ENCODE measurements at regions of chr14 and their contacts with region 1.

Region 1: DNA sequence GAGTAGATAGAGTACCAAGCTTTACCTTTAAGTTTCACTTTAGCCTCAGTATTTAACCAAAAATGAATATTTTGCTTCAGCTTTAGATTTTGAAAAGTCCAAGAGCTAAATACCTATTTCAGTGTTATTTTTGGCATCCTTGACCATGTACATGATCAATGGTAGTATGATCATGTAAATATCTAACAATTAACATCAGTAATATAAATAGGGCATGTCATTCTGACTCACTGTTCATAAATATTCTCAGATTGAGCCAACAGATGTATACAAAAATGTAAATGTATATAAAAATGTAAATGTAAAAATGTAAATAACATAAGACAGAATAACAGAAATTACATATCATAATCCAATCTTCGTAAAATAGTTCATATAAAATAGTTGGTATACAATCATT is 15.3 kb upstream of the NOXRED1 start:
- DNase-seq: no peak
- ATAC-seq: no peak
- H3K4me3 Mint-ChIP-seq: no peak overlapping the region
- H3K27ac Mint-ChIP-seq: no peak overlapping the region
- H3K4me1 Mint-ChIP-seq: no peaks in the 10 kb centered on the region
- H3K27me3 Mint-ChIP-seq: no peaks in the 10 kb centered on the region

Region 2: GRCh38 chr14:77424862-77425261 is 13.7 kb before region 1 on chr14:
- CTCF ChIA-PET with region 1: interaction called, 12 read pairs
- POLR2A ChIA-PET with region 1: interaction called, 3 read pairs
- intact Hi-C with region 1: no loop called
- DNase-seq: no peak
- ATAC-seq: no peak
- H3K4me3 Mint-ChIP-seq: no peak overlapping the region
- H3K27ac Mint-ChIP-seq: no peak overlapping the region
- H3K4me1 Mint-ChIP-seq: no peaks in the 10 kb centered on the region
- H3K27me3 Mint-ChIP-seq: no peaks in the 10 kb centered on the region

Region 3: DNA sequence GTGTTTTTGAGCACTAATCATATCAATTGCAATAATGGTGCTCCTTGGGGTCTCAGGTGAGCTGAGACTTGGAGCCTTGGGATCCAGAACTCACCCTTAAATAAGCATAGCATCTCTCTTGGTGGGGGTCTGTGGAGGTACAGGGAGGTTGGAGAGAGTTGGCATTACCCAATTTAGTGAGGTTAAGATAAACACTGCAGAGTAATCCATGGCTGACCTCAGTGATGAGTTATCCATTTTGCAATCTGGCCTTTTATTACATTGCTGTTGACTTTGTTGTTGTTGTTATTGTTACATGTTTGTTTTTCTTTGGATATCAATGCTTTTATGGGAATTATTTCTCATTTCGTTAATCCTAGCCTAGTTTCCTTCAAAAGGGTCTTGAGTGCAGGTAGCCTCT is 1104.8 kb after region 1 on chr14:
- CTCF ChIA-PET with region 1: no interaction called
- POLR2A ChIA-PET with region 1: no interaction called
- intact Hi-C with region 1: no loop called
- DNase-seq: no peak
- ATAC-seq: no peak
- H3K4me3 Mint-ChIP-seq: no peak overlapping the region
- H3K27ac Mint-ChIP-seq: no peak overlapping the region
- H3K4me1 Mint-ChIP-seq: no peaks in the 10 kb centered on the region
- H3K27me3 Mint-ChIP-seq: peaks cover 1% of the 10 kb centered on the region